Activated CD8-positive, alpha-beta T cell treated with anti-CD3 and anti-CD28 coated beads, Interleukin-2, amount 10 ng/mL, durations not matched to agents 7 days and 5 days (primary cell): ENCODE measurements at regions of chr22 and their contacts with region 1.

Region 1: DNA sequence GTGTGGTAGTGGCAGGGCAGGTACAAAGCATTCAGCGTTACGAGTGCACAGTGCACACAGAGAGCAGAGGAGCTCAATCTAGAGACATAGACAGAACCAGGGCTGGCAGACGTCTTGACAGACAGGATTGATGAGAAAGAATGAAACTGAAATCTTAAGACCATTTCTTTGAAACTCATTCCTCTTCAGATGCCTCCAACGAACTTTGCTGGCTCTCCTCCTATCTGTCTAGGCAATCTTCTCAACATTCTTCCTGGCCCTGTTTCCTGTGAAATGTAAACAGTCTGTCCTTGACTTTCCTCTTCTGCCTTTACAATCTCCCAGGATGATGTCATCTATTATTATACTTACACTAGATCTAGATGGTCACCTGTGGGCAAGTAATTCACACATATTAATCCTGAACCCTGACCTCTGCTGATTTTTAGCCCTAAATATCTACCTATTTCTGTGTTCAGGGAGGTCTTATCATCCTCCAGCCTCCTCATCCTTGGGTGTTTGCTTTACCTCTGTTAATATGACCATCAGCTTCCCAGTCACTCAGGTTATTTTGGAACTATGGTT is 119.5 kb downstream of the ENTHD1 start:
- DNase-seq: peak; percentile 80
- ATAC-seq: peak; percentile 99
- H3K4me3 Mint-ChIP-seq: peak overlapping the region; percentile 39
- H3K27ac Mint-ChIP-seq: peak overlapping the region; percentile 85
- H3K4me1 Mint-ChIP-seq: peaks cover 40% of the 10 kb centered on the region
- H3K27me3 Mint-ChIP-seq: no peaks in the 10 kb centered on the region

Region 2: DNA sequence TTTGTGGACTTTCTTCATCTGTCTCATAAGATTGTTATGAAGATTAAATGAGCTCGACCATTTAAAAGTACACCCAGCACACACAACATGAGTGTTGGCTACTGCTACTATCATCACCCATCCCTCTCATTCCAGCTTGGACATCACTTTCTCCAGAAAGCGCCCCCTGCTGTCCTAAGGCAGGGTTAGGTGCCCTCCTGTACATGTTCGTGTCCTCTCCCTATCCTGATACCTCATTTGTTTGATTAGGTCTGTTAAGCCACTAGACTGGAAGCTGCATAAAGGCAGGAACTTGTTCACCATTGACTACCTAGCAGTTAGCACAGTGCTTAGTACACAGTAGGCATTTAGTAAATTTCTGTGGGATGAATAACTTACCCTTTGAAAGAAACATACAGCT is 34.0 kb after region 1 on chr22:
- CTCF ChIA-PET with region 1: interaction called, 14 read pairs
- POLR2A ChIA-PET with region 1: no interaction called
- DNase-seq: no peak
- ATAC-seq: no peak
- H3K4me3 Mint-ChIP-seq: no peak overlapping the region
- H3K27ac Mint-ChIP-seq: no peak overlapping the region
- H3K4me1 Mint-ChIP-seq: peaks cover 22% of the 10 kb centered on the region
- H3K27me3 Mint-ChIP-seq: peaks cover 24% of the 10 kb centered on the region